ENCODE measurements at regions of chr5 and their contacts with region 1.

Region 1: GRCh38 chr5:170183816-170184687 is 48.7 kb upstream of the C5orf58 start:
- DNase-seq: peak; percentile 67
- CTCF ChIP-seq: peak; percentile 89

Region 2: GRCh38 chr5:169503886-169504285 is 680.2 kb before region 1 on chr5:
- CTCF ChIA-PET with region 1: no interaction called
- POLR2A ChIA-PET with region 1: no interaction called
- DNase-seq: no peak
- CTCF ChIP-seq: no peak

Region 3: GRCh38 chr5:169753795-169754194 is 430.3 kb before region 1 on chr5:
- CTCF ChIA-PET with region 1: no interaction called
- POLR2A ChIA-PET with region 1: no interaction called
- DNase-seq: no peak
- CTCF ChIP-seq: no peak

Region 4: DNA sequence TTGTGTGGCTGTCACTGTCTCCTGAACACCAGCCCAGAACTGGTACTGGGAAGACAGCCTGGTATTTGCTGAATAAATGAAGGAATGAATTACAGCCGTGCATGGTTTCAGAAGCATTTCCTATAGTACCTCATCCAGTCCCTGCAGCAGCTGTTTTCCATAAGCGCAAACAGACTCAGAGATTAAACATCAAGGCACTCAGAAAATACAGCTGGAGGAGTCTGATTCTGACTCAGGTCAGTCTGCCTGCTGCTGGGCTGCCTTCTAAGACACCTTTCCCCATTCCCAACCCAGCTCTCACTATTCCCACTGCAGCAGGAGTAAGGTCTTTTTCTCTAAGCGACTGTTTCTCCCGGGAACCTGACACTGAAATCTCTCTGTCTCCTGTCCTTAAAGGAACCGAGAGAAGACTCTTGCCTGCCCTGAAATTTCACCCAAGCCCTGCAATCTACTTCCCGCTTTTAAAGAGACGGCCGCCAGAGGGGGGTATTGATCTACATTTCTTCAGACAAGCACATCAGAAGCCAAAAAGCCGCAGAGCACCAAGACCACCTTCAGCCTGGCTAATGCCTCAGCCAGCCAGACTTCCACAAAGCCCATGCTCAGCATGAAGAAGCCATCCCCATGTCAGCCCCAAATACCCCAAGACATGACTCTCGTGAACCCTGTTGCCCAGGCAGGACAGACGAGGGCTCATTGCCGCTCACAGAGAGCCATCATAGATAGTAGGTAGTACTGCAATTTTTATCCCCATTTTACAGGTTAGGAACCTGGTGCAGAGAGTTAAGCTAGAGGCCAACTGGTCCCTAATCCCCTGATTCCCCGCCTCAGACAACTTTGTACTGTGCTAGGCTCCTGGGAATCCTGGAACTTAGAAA is 83.7 kb before region 1 on chr5:
- CTCF ChIA-PET with region 1: interaction called, 100 read pairs
- POLR2A ChIA-PET with region 1: no interaction called
- DNase-seq: peak; percentile 64
- CTCF ChIP-seq: peak; percentile 60

Region 5: DNA sequence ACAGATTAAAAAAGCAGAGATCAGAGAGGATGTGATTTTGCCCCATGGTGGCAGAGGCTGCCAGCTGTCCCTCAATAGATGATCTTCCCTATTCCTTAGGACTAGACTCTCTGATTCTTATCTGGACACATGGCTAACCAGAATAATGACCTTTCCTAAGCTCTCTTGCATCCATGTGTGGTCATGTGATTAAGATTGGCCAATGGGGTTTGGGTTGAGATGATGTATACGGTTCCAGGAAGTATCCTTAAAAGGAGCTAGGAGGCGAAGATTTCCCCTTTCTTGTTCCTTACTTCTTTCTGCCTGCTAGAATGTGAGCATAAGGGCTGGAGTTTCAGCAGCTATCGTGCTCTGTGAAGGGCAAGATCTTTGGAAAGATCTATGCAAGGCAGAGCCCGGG is 38.6 kb before region 1 on chr5:
- CTCF ChIA-PET with region 1: interaction called, 12 read pairs
- POLR2A ChIA-PET with region 1: no interaction called
- DNase-seq: no peak
- CTCF ChIP-seq: no peak

Region 6: GRCh38 chr5:170162626-170163321 is 21.3 kb before region 1 on chr5:
- CTCF ChIA-PET with region 1: interaction called, 39 read pairs
- POLR2A ChIA-PET with region 1: no interaction called
- DNase-seq: no peak
- CTCF ChIP-seq: no peak

Region 7: DNA sequence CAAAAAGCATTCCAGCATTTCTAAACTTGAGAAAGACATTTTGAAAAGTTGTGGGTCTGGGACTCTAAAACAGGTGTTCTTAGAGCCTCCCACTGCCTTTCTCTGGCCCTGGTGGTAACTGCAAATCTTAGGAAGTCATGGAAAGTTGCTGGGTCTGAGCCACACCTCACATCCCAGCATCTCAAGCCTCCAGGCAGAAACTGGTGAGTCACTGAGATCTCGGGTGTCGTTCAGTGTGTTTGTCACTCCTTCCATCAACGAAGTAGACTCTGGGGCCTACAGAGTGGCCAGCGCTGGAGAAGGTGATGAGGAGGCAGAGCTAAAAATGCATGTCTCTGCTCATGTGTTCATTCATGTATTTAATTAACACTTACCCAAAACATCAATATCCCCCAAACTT is 10.8 kb before region 1 on chr5:
- CTCF ChIA-PET with region 1: interaction called, 39 read pairs
- POLR2A ChIA-PET with region 1: no interaction called
- DNase-seq: no peak
- CTCF ChIP-seq: no peak

Region 8: DNA sequence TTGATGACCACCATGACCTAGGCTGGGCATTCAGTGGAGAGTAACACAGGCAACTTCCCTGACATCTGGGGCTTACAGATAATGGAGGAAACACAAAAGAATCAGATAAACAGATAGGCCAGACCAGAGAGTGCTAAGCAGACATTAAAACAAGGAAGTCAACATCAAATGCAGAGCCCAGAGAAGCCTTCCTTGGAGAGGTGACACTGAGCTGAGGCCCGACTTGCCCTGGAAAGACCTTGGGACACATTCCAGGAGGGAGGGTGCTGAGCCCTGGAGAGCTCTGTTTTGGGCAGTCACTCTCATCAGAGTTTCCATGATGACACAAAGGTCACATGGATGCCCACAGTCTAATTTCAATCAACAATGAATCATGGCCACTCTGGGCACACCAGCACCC is 16.8 kb after region 1 on chr5:
- CTCF ChIA-PET with region 1: interaction called, 57 read pairs
- POLR2A ChIA-PET with region 1: no interaction called
- DNase-seq: no peak
- CTCF ChIP-seq: no peak

Region 9: GRCh38 chr5:170534177-170534576 is 350.1 kb after region 1 on chr5:
- CTCF ChIA-PET with region 1: no interaction called
- POLR2A ChIA-PET with region 1: no interaction called
- DNase-seq: no peak
- CTCF ChIP-seq: no peak

Measured in GM10248 (cell line).